B cell (primary cell): ENCODE measurements at regions of chr5 and their contacts with region 1.

Region 1: DNA sequence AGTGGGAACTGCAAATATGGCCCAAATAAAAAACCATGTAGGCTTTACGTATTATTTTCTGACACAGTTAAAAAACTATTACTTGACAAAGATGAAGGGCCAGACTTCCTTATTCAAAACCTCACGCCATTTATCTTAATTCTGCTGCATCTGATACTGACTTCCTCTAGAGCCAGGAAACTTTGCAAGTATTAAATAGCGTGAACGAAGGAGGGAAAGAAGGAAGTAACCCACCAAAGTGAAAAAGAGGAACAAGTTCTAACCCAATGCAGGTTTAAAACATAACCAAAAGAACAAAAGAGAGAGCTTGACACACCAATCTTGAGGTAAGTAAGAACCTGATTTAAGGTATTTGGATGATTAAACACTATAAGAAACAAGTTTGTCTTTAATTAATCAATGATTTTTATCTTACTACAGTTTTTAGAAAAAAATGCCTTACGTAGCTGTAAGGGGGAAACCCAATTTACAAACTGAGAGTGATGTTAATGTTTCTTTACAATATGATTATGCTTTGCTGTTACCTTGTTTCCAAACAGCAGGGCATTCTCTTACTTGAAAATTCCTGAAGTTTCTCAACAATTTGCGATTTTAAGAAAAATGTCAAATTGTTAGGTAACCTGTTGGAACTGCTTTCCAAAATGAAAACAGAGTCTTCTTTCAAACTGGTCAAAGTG is at the start of gene GAPT:
- DNase-seq: peak; percentile 86
- ATAC-seq: peak; percentile 88
- H3K4me3 ChIP-seq: peak within 1 kb of the TSS; percentile 56 to 98 (median 66)
- H3K4me3 Mint-ChIP-seq: peak within 1 kb of the TSS; percentile 86
- H3K27ac ChIP-seq: peak within 1 kb of the TSS; percentile 73 to 90
- H3K27ac Mint-ChIP-seq: peak within 1 kb of the TSS; percentile 92
- H3K4me1 ChIP-seq: peaks cover 30 to 55% of the 10 kb centered on the region in 2 donors
- H3K4me1 Mint-ChIP-seq: peaks cover 60% of the 10 kb centered on the region
- H3K27me3 ChIP-seq: no peaks in the 10 kb centered on the region
- H3K27me3 Mint-ChIP-seq: no peaks in the 10 kb centered on the region
- CTCF ChIP-seq: no peak
- total RNA-seq, gene GAPT: 40.6 and 51.3 TPM in 2 replicates

Region 2: DNA sequence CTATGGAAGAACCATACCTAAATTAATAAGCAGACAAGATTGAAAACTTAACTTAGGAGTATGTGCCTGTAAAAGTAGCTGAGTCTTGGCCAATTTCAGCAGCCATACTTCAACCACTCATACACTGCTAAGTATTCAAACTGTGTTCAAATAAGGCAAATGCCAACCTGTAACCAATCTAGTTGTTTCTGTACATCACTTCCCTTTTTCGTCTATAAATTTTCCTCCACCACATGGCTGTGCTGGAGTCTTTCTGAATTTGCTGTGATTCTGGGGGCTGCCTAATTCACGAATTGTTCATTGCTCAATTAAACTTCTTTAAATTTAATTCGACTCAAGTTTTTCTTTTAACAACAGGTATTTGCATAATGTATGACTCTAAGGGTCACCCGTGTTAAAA is 215.8 kb before region 1 on chr5:
- CTCF ChIA-PET with region 1: no interaction called
- POLR2A ChIA-PET with region 1: no interaction called
- intact Hi-C with region 1: no loop called
- DNase-seq: no peak
- ATAC-seq: no peak
- H3K4me3 ChIP-seq: no peak overlapping the region
- H3K4me3 Mint-ChIP-seq: no peak overlapping the region
- H3K27ac ChIP-seq: no peak overlapping the region
- H3K27ac Mint-ChIP-seq: no peak overlapping the region
- H3K4me1 ChIP-seq: no peaks in the 10 kb centered on the region
- H3K4me1 Mint-ChIP-seq: no peaks in the 10 kb centered on the region
- H3K27me3 ChIP-seq: no peaks in the 10 kb centered on the region
- H3K27me3 Mint-ChIP-seq: peaks cover 11% of the 10 kb centered on the region
- CTCF ChIP-seq: no peak

Region 3: DNA sequence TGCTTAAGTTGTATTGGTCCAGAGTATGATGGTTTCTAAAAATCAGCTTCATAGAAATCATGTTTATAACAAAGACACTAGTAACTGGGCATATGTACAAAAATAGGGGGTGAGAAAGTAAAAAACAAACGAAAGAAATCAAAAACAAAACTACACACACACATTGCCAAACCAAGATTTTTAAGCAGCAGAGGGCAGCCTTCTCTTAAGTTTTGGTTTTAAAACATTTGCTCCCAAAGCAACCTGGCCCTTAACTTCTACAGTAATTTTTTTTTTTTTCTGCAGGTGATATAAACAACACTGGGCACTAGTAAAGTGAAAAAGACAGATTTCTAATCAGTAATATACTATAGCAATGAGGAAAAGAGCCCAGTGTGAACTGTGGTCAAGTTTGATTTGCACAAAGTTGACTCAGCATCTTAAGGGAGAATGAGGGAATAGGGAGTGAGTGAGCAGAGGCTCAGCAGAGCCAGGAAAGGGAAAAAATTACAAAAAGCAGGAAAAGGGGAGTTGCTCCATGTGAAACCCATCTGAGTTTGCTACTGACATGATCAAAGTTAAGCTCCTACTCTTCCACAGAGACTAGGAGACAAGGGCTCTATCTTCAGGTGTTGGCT is 13.5 kb before region 1 on chr5:
- CTCF ChIA-PET with region 1: interaction called, 24 read pairs
- POLR2A ChIA-PET with region 1: no interaction called
- intact Hi-C with region 1: no loop called
- DNase-seq: peak; percentile 59
- ATAC-seq: no peak
- H3K4me3 ChIP-seq: peak overlapping the region in 1 of 5 experiments; percentile 18
- H3K4me3 Mint-ChIP-seq: peak overlapping the region; percentile 14
- H3K27ac ChIP-seq: no peak overlapping the region
- H3K27ac Mint-ChIP-seq: no peak overlapping the region
- H3K4me1 ChIP-seq: peaks cover 15 to 21% of the 10 kb centered on the region in 2 donors
- H3K4me1 Mint-ChIP-seq: peaks cover 20% of the 10 kb centered on the region
- H3K27me3 ChIP-seq: no peaks in the 10 kb centered on the region
- H3K27me3 Mint-ChIP-seq: no peaks in the 10 kb centered on the region
- CTCF ChIP-seq: peak; percentile 76

Region 4: GRCh38 chr5:58505971-58506640 is 14.8 kb after region 1 on chr5:
- CTCF ChIA-PET with region 1: interaction called, 10 read pairs
- POLR2A ChIA-PET with region 1: interaction called, 6 read pairs
- intact Hi-C with region 1: loop called (anchors 1 kb)
- DNase-seq: peak; percentile 55
- ATAC-seq: peak; percentile 92
- H3K4me3 ChIP-seq: peak overlapping the region in 4 of 5 experiments; percentile 12 to 57 (median 18)
- H3K4me3 Mint-ChIP-seq: peak overlapping the region; percentile 64
- H3K27ac ChIP-seq: peak overlapping the region; percentile 47 to 61
- H3K27ac Mint-ChIP-seq: peak overlapping the region; percentile 81
- H3K4me1 ChIP-seq: peaks cover 62 to 63% of the 10 kb centered on the region in 2 donors
- H3K4me1 Mint-ChIP-seq: peaks cover 76% of the 10 kb centered on the region
- H3K27me3 ChIP-seq: no peaks in the 10 kb centered on the region
- H3K27me3 Mint-ChIP-seq: no peaks in the 10 kb centered on the region
- CTCF ChIP-seq: no peak

Region 5: DNA sequence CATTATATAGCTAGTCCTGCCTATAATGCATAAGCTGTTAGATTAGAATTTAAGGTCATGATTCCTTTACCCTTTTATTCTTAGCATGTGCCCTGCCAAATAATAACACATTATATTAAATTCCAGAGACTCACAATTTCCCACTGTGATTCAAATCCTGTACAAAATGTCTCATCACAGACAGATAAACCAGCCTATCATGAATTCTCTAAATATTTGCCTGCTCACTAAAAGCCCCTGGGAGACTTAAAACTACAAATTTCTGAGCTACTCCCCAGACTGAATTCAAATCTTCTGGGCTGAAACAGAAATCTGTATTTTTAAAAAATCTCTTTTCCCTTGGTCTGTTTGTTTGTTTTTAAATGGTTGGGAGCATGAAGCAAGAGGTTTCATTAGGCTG is 32.6 kb after region 1 on chr5:
- CTCF ChIA-PET with region 1: no interaction called
- POLR2A ChIA-PET with region 1: no interaction called
- intact Hi-C with region 1: loop called (anchors 5 kb)
- DNase-seq: no peak
- ATAC-seq: no peak
- H3K4me3 ChIP-seq: no peak overlapping the region
- H3K4me3 Mint-ChIP-seq: no peak overlapping the region
- H3K27ac ChIP-seq: no peak overlapping the region
- H3K27ac Mint-ChIP-seq: no peak overlapping the region
- H3K4me1 ChIP-seq: peaks cover 3 to 5% of the 10 kb centered on the region in 2 donors
- H3K4me1 Mint-ChIP-seq: peaks cover 12% of the 10 kb centered on the region
- H3K27me3 ChIP-seq: no peaks in the 10 kb centered on the region
- H3K27me3 Mint-ChIP-seq: no peaks in the 10 kb centered on the region
- CTCF ChIP-seq: no peak

Region 6: DNA sequence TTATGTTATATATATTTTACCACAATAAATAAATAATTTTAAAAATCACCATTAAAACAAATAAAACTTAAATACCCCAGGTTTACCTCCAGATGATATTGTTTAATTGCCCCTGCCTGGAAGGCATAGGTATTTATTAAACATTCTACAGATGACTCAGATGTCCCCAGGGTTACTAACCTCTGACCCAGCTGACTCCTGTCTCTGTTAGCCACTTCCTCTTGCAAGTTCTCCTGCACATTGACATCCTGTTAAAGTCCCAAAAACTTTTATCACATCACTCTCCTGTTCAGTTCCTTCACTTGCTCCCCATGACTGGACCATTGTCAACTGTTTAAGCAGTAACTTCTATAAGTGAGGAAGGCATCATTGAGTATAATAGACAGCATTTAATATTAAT is 54.6 kb after region 1 on chr5:
- CTCF ChIA-PET with region 1: no interaction called
- POLR2A ChIA-PET with region 1: no interaction called
- intact Hi-C with region 1: loop called (anchors 5 kb)
- DNase-seq: peak; percentile 17
- ATAC-seq: peak; percentile 67
- H3K4me3 ChIP-seq: no peak overlapping the region
- H3K4me3 Mint-ChIP-seq: peak overlapping the region; percentile 15
- H3K27ac ChIP-seq: no peak overlapping the region
- H3K27ac Mint-ChIP-seq: no peak overlapping the region
- H3K4me1 ChIP-seq: peaks cover 34 to 38% of the 10 kb centered on the region in 2 donors
- H3K4me1 Mint-ChIP-seq: peaks cover 42% of the 10 kb centered on the region
- H3K27me3 ChIP-seq: no peaks in the 10 kb centered on the region
- H3K27me3 Mint-ChIP-seq: no peaks in the 10 kb centered on the region
- CTCF ChIP-seq: no peak

Region 7: GRCh38 chr5:58582803-58583491 is 91.6 kb after region 1 on chr5 and contains the start of gene RAB3C:
- CTCF ChIA-PET with region 1: interaction called, 3 read pairs
- POLR2A ChIA-PET with region 1: no interaction called
- intact Hi-C with region 1: loop called (anchors 2 kb)
- DNase-seq: peak; percentile 87
- ATAC-seq: peak; percentile 100
- H3K4me3 ChIP-seq: peak within 1 kb of the TSS; percentile 63 to 97 (median 92)
- H3K4me3 Mint-ChIP-seq: peak within 1 kb of the TSS; percentile 93
- H3K27ac ChIP-seq: no peak within 1 kb of the TSS
- H3K27ac Mint-ChIP-seq: peak within 1 kb of the TSS; percentile 38
- H3K4me1 ChIP-seq: peaks cover 15 to 19% of the 10 kb centered on the region in 2 donors
- H3K4me1 Mint-ChIP-seq: peaks cover 23% of the 10 kb centered on the region
- H3K27me3 ChIP-seq: peaks cover 7 to 37% (median 25%) of the 10 kb centered on the region in 4 experiments
- H3K27me3 Mint-ChIP-seq: peaks cover 36% of the 10 kb centered on the region
- CTCF ChIP-seq: no peak
- total RNA-seq, gene RAB3C: 0.20 and 0.32 TPM in 2 replicates

Region 8: GRCh38 chr5:58759745-58760144 is 268.4 kb after region 1 on chr5:
- CTCF ChIA-PET with region 1: no interaction called
- POLR2A ChIA-PET with region 1: no interaction called
- intact Hi-C with region 1: loop called (anchors 5 kb)
- DNase-seq: peak; percentile 39
- ATAC-seq: peak; percentile 57
- H3K4me3 ChIP-seq: peak overlapping the region; percentile 18 to 61 (median 26)
- H3K4me3 Mint-ChIP-seq: peak overlapping the region; percentile 85
- H3K27ac ChIP-seq: peak overlapping the region in 1 of 2 donors; percentile 62
- H3K27ac Mint-ChIP-seq: peak overlapping the region; percentile 69
- H3K4me1 ChIP-seq: peaks cover 12 to 14% of the 10 kb centered on the region in 2 donors
- H3K4me1 Mint-ChIP-seq: peaks cover 34% of the 10 kb centered on the region
- H3K27me3 ChIP-seq: no peaks in the 10 kb centered on the region
- H3K27me3 Mint-ChIP-seq: no peaks in the 10 kb centered on the region
- CTCF ChIP-seq: no peak